ENCODE measurements at regions of chr6 and their contacts with region 1.

Region 1: DNA sequence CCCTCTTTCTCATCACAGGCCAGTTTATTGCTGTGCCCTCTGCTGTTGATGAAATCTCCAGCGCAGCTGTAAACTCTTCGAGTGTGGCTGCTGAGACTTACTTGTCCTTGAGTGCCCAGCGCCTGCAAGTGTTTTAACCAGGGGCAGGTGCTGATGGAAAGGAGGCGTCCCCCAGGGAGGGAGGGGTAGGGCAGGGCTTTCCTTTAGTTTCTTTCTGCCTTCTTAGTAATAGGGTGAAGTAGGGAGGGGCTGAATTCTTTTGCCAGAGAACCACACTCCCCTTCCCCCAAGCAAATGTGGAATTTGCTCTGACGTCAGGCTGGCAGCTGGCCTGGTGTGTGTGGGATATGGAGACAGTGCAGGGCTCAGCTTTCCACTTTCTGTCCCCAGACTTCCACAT is 61.2 kb downstream of the IGF2R start:
- DNase-seq: peak; percentile 88 to 93
- ATAC-seq: peak; percentile 90 to 97 (median 95)
- H3K4me3 ChIP-seq: no peak overlapping the region
- H3K27ac ChIP-seq: peak overlapping the region in 9 of 10 donors; percentile 50 to 82 (median 70)
- H3K4me1 ChIP-seq: peaks cover 11 to 35% (median 20%) of the 10 kb centered on the region in 9 donors
- H3K27me3 ChIP-seq: no peaks in the 10 kb centered on the region
- CTCF ChIP-seq: peak in 3 of 9 donors; percentile 26 to 36 (median 31)

Region 2: GRCh38 chr6:159852877-159853276 is 177.2 kb before region 1 on chr6:
- intact Hi-C with region 1: loop called in 1 of 10 experiments (anchors 10 kb)
- DNase-seq: no peak
- ATAC-seq: no peak
- H3K4me3 ChIP-seq: no peak overlapping the region
- H3K27ac ChIP-seq: no peak overlapping the region
- H3K4me1 ChIP-seq: peaks cover 0 to 14% (median 0%) of the 10 kb centered on the region in 9 donors
- H3K27me3 ChIP-seq: no peaks in the 10 kb centered on the region
- CTCF ChIP-seq: peak in 5 of 9 donors; percentile 11 to 31 (median 24)

Region 3: DNA sequence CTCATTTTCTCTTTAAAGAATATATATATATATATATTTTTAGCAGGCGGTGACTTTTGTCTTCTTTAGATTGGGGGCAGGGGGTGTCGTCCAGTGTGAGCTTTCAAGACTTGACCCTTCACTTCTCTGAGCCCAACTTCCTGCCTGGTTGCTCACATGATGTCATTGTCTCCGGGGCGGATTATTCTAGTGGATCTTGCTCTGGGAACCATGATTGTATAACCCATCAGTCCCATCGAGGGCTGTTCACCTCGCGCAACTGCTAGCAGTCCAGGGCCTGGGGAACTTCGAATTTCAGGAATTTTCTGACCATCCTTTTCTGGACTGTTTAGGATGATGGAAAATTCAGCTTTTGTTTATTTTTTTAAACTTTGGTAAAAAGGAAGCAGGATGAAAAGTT is 60.2 kb before region 1 on chr6:
- intact Hi-C with region 1: loop called in 6 of 10 experiments (anchors 5 to 10 kb)
- DNase-seq: peak in 1 of 2 donors; percentile 74
- ATAC-seq: peak in 7 of 8 donors; percentile 52 to 79 (median 68)
- H3K4me3 ChIP-seq: peak overlapping the region; percentile 84 to 99 (median 97)
- H3K27ac ChIP-seq: peak overlapping the region; percentile 26 to 98 (median 94)
- H3K4me1 ChIP-seq: peaks cover 15 to 81% (median 49%) of the 10 kb centered on the region in 9 donors
- H3K27me3 ChIP-seq: no peaks in the 10 kb centered on the region
- CTCF ChIP-seq: no peak

Region 4: GRCh38 chr6:159979136-159979874 is 50.8 kb before region 1 on chr6:
- intact Hi-C with region 1: loop called in 7 of 10 experiments (anchors 2 to 10 kb)
- DNase-seq: peak in 1 of 2 donors; percentile 24
- ATAC-seq: peak in 6 of 8 donors; percentile 7 to 70 (median 40)
- H3K4me3 ChIP-seq: no peak overlapping the region
- H3K27ac ChIP-seq: peak overlapping the region in 9 of 10 donors; percentile 55 to 85 (median 72)
- H3K4me1 ChIP-seq: peaks cover 26 to 100% (median 84%) of the 10 kb centered on the region in 9 donors
- H3K27me3 ChIP-seq: no peaks in the 10 kb centered on the region
- CTCF ChIP-seq: no peak

Region 5: DNA sequence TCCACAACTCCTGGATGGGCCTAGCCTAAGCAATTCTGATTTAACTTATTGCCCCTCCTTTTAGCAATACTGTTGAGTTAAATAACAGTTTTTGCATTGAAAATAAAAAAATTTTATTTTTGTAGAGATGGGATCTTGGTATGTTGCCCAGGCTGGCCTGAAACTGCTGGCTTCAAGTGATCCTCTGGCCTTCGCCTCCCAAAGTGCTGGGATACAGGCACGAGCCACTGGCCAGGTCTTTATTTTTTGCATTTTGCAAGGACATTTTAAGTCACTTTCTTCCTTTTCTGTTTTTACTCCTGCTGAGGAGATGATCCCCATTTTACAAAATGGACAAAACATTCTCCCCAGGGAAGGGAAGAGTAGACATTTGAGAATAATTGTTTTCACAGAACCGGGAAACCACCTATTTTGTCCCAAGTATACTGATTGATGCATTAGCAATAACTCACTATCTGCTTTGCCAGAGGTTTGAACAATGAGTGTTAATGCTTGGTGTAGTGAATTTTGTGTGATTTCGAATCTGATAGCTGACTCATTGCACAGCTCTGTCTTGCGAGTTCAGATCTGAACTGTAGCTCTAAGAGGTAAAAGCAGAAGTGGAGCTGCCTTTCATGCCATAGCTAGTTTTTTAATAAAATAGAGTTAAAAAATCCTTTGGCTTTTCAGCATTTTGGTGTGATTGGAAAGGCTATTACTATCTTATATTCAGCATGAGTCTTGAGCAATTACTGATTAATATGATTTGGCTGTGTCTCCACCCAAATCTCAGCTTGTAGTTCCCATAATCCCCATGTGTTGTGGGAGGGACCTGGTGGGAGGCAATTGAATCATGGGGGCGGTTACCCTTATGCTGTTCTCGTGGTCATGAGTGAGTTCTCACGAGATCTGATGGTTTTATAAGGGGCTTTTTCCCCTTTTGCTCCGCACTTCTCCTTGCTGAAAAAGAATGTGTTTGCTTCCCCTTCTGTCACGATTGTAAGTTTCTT is 40.3 kb before region 1 on chr6:
- intact Hi-C with region 1: loop called in 1 of 10 experiments (anchors 5 kb)
- DNase-seq: no peak
- ATAC-seq: no peak
- H3K4me3 ChIP-seq: no peak overlapping the region
- H3K27ac ChIP-seq: peak overlapping the region in 2 of 10 donors; percentile 11 to 48
- H3K4me1 ChIP-seq: peaks cover 6 to 82% (median 43%) of the 10 kb centered on the region in 9 donors
- H3K27me3 ChIP-seq: no peaks in the 10 kb centered on the region
- CTCF ChIP-seq: no peak

Measured in heart right ventricle (tissue), 16 donors.